ENCODE measurements at regions of chr6 and their contacts with region 1.

Region 1: GRCh38 chr6:125790358-125791150 is at the start of gene NCOA7:
- DNase-seq: peak; percentile 85
- CTCF ChIP-seq: no peak

Region 2: DNA sequence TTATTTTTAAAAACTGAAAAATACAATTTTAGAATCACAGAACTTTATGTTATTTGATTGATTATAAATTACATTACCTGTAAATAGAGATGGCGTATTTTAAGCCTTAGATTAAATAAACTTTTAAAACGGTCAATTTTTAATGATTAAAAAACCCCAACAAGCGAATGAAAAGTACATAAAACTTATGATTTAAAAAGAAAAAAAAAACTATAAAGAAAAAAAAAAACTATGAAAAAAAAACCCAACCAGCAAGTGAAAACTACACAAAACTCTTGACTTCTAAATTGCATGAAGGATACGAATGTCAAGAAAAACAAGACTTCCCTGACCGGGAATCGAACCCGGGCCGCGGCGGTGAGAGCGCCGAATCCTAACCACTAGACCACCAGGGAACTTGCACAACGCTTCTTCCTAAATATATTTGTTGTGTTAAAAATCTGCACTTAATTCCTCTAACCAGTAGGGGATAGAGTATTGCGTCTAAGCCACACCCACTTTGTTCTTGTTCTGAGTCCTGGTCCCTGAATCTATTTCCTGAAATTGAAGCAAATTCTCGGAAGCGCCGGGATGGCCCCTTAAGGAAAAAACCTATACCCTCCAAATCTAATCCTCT is 10.5 kb before region 1 on chr6:
- CTCF ChIA-PET with region 1: interaction called, 53 read pairs
- POLR2A ChIA-PET with region 1: interaction called, 16 read pairs
- DNase-seq: peak; percentile 86
- CTCF ChIP-seq: no peak

Region 3: DNA sequence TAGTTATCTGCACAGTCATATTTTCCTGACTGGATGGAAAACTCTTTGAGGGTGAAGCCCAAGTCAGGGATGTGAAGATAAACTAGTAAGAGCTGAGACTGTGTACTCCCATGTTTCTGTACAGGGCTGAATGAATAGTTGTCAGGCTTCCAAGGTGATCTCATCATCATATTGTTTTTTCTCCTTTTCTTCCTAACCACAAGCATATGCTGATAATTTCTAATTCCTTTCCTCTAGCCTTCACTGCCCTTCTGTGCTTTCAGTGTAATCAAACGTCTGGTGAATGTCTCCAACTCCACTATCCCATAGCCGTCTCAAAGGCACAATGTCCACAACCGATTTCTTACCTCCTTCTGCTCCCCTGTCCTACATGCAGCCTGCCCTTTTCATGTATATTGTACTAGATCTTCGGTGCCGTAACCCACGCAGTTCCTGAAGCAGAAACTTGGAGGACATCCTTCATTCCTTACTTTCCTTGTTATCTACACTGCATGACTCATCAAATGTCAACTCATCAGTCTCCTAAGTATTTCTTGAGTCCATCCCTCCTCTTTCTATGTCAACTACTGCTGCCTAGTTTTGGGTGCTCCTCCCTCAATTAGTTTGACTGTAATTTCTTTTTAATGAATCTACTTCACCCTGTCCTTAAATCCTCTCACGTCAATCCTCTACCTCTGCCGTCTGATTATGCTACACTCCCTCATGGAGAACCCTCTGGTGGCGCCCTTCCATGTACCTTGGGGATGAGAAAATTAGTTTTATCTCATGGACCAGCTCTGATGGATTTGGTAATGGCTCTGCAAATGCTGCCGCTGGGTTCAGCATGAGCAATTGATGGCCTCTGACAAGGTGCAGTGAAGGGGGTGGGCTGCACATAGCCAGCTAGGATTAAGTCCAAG is 22.1 kb after region 1 on chr6:
- CTCF ChIA-PET with region 1: interaction called, 143 read pairs
- POLR2A ChIA-PET with region 1: no interaction called
- DNase-seq: no peak
- CTCF ChIP-seq: no peak

Region 4: DNA sequence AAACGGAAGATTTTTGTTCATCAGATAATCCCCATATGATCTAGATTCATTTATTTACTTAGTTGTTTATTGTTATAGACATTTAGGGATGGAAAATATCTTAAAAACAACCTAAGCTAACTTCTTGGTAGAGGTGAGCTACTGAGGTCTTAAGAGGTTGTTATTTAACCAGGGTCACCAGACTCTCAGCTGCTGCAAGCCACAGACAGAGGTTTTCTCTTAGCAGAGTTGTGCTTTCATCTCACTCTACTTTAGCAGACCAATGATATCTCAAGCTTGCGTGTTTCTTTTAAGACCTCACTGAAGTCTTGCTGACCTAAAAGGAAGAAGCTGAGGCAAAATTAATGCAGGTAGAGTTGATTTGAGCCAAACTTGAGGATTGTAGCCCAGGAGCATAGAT is 43.8 kb after region 1 on chr6:
- CTCF ChIA-PET with region 1: interaction called, 10 read pairs
- POLR2A ChIA-PET with region 1: interaction called, 3 read pairs
- DNase-seq: no peak
- CTCF ChIP-seq: no peak

Region 5: DNA sequence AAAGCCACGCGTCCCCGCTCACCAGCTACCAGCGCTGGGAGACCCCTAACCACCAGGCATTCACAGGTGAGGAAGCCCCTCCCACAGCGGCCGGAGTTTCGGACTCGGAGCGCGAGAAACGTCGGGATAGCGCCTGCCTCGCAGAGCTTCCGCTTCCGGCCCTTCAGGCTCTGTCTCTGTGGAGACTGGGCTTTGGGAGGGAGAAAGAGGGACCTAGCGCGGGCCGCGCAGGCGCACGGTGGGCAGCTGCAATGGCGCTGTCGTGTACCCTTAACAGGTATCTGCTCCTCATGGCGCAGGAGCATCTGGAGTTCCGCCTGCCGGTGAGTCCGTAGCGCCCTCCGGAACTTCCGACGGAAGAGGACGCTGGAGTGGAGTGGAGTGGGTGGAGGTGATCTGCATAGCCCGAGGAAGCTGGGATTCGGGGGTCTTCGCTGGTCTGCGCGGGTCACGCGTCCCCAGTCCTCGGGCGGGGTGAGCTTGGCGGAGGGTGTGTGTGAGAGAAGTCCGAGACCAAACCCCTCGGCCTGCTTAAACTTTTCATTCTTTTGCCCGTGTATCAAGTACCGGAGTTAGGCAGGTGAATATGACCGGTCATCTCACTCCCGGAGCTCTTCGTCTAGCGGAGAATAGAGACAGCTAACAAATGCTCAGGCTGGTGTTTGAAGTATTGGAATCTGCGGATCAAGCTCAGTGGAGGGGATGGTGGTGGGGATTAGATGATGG is 195.9 kb after region 1 on chr6 and contains the start of gene TRMT11:
- CTCF ChIA-PET with region 1: interaction called, 14 read pairs
- POLR2A ChIA-PET with region 1: interaction called, 6 read pairs
- DNase-seq: peak; percentile 92
- CTCF ChIP-seq: no peak

Region 6: GRCh38 chr6:126440923-126441322 is 650.4 kb after region 1 on chr6:
- CTCF ChIA-PET with region 1: no interaction called
- POLR2A ChIA-PET with region 1: no interaction called
- DNase-seq: no peak
- CTCF ChIP-seq: no peak

Measured in GM10248 (cell line).